SK-N-SH (cell line): ENCODE measurements at regions of chr6 and their contacts with region 1.

Region 1: DNA sequence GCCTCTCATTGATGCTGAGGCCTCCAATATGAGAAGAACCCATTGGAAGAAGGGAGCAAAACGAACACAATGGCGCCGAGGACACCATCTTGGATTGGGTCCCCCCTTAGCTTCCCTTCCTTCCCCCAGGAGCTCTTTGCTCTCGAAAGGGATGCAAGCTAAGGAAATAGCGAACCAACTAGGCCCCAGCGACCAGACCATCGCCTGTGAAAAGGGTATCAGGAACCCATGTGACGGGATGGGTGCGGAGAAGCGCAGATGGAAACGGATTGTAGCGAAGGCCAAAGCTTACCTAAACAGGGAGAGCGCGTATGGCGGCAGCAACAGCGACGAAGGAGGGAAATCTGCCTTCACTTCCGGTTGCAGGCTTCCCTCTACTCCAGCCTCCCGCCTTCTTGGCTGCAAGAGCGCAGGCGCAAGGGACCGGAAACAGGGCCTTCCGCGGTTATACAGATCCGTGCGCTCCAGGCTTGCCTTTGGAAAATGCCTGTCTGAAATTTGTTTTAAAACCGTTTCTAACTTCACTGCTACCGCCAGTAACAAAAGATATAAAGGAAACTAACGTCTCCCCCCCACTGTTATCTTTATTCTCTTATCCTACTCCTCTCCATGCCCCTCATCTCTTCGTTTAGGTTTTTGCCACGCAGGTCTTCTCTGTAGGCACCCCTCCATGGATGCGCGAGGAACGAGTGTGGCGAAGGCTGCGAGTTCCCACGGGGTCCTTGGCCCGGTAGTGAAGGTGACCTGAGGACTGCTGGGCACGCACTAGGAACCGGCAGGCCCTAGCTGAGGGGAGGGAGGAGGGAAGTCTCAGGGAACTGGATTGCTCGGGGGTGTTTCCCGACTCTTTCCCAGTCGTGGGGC is at the start of gene DDX39B:
- DNase-seq: peak; percentile 87
- H3K4me3 ChIP-seq: peak within 1 kb of the TSS; percentile 74 to 91
- H3K27ac ChIP-seq: peak within 1 kb of the TSS; percentile 95 to 97
- H3K4me1 ChIP-seq: peaks cover 15 to 28% of the 10 kb centered on the region in 2 experiments; a peak in 3 of 4 replicates
- H3K27me3 ChIP-seq: no peaks in the 10 kb centered on the region
- CTCF ChIP-seq: no peak
- EP300 ChIP-seq: peak; percentile 29; a peak in 2 of 4 replicates
- RAD21 ChIP-seq: no peak
- polyA plus RNA-seq, gene DDX39B: 502 and 556 TPM in 2 replicates

Region 2: DNA sequence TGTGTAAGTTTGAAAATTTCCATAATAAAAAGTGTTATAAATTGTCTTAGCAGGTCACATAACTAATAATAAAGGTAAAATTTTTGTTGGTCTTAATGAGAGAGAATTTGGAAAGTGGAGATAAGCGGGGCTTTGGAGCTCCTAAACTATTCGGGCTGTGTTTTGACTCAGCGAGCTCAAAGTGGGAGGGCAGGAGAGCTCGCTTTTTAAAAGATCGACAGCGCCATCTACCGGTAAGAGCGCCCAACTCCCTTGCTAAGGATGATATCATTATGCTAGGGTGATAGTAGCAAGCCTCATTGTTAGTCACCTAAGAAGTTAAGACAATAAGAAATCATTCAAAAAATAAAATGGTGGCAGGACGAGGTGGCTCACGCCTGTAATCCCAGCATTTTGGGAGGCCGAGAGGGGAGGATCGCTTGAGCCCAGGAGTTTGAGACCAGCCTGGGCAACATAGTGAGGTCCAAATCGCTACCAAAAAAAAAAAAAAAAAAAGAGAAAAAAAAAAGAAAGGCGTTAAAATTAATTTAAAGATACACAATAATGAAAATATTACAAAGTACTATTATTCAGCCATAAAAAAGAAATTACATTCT is 454.3 kb before region 1 on chr6:
- CTCF ChIA-PET with region 1: no interaction called
- POLR2A ChIA-PET with region 1: no interaction called
- DNase-seq: peak; percentile 80
- H3K4me3 ChIP-seq: peak overlapping the region in 1 of 2 experiments; percentile 47; a peak in 3 of 4 replicates
- H3K27ac ChIP-seq: peak overlapping the region in 1 of 2 experiments; percentile 94; a peak in 3 of 4 replicates
- H3K4me1 ChIP-seq: peaks cover 3 to 11% of the 10 kb centered on the region in 2 experiments; a peak in 2 of 4 replicates
- H3K27me3 ChIP-seq: no peaks in the 10 kb centered on the region
- CTCF ChIP-seq: peak; percentile 92
- EP300 ChIP-seq: no peak
- RAD21 ChIP-seq: peak; percentile 86

Region 3: GRCh38 chr6:31462964-31463870 is 78.7 kb before region 1 on chr6:
- CTCF ChIA-PET with region 1: no interaction called
- POLR2A ChIA-PET with region 1: no interaction called
- DNase-seq: peak; percentile 69
- H3K4me3 ChIP-seq: peak overlapping the region; percentile 42 to 47; a peak in 3 of 4 replicates
- H3K27ac ChIP-seq: no peak overlapping the region
- H3K4me1 ChIP-seq: no peaks in the 10 kb centered on the region; a peak in 1 of 4 replicates
- H3K27me3 ChIP-seq: peaks cover 30% of the 10 kb centered on the region
- CTCF ChIP-seq: no peak
- EP300 ChIP-seq: no peak
- RAD21 ChIP-seq: no peak

Region 4: DNA sequence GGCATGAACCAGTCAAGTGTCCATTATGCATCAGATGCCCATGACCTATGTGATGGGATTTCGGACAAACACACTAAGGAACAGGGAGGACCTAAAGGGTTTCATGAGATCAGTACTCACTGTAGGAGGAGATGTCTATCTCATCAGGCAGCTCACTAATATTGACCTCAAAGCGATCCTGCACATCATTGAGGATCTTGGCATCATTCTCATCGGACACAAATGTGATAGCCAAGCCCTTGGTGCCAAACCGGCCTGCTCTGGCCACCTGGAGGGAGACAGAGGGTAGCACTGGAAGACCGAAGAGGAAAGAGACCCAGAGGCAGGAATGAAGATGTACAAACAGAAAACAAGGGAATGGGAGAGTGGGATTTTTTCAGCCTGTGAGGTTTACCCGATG is 11.2 kb before region 1 on chr6:
- CTCF ChIA-PET with region 1: interaction called, 5 read pairs
- POLR2A ChIA-PET with region 1: interaction called, 12 read pairs
- DNase-seq: no peak
- H3K4me3 ChIP-seq: no peak overlapping the region
- H3K27ac ChIP-seq: no peak overlapping the region
- H3K4me1 ChIP-seq: peaks cover 0 to 11% of the 10 kb centered on the region in 2 experiments; a peak in 2 of 4 replicates
- H3K27me3 ChIP-seq: no peaks in the 10 kb centered on the region
- CTCF ChIP-seq: no peak; the same call in 1 of the 2 replicates
- EP300 ChIP-seq: no peak
- RAD21 ChIP-seq: no peak